Mammary epithelial cell (primary cell): ENCODE measurements at regions of chr10 and their contacts with region 1.

Region 1: GRCh38 chr10:18104223-18104872 is 35.9 kb upstream of the CACNB2 start:
- DNase-seq: peak; percentile 8
- H3K4me3 ChIP-seq: no peak overlapping the region
- H3K27ac ChIP-seq: no peak overlapping the region
- H3K4me1 ChIP-seq: no peaks in the 10 kb centered on the region
- H3K27me3 ChIP-seq: no peaks in the 10 kb centered on the region
- CTCF ChIP-seq: peak; percentile 49 to 59

Region 2: GRCh38 chr10:17910125-17910789 is 194.1 kb before region 1 on chr10:
- CTCF ChIA-PET with region 1: no interaction called
- dilution Hi-C with region 1: no loop called
- in situ Hi-C with region 1: loop called in 1 of 2 experiments (anchors 10 kb)
- intact Hi-C with region 1: loop called (anchors 1 kb)
- DNase-seq: peak; percentile 27
- H3K4me3 ChIP-seq: no peak overlapping the region
- H3K27ac ChIP-seq: no peak overlapping the region
- H3K4me1 ChIP-seq: no peaks in the 10 kb centered on the region
- H3K27me3 ChIP-seq: no peaks in the 10 kb centered on the region
- CTCF ChIP-seq: peak; percentile 24 to 57